CD8-positive, alpha-beta memory T cell (primary cell): ENCODE measurements at regions of chr19 and their contacts with region 1.

Region 1: GRCh38 chr19:14505488-14506432 is 9.8 kb upstream of the GIPC1 start:
- DNase-seq: peak; percentile 63 to 84 (median 66)
- H3K4me3 ChIP-seq: peak overlapping the region; percentile 37
- H3K4me3 Mint-ChIP-seq: peak overlapping the region; percentile 29 to 75 (median 37)
- H3K27ac ChIP-seq: peak overlapping the region; percentile 25
- H3K27ac Mint-ChIP-seq: peak overlapping the region; percentile 89 to 98 (median 93)
- H3K4me1 ChIP-seq: peaks cover 55% of the 10 kb centered on the region
- H3K4me1 Mint-ChIP-seq: peaks cover 32 to 55% (median 48%) of the 10 kb centered on the region in 3 donors
- H3K27me3 ChIP-seq: no peaks in the 10 kb centered on the region
- H3K27me3 Mint-ChIP-seq: no peaks in the 10 kb centered on the region

Region 2: GRCh38 chr19:14337510-14337909 is 168.2 kb before region 1 on chr19:
- CTCF ChIA-PET with region 1: no interaction called
- POLR2A ChIA-PET with region 1: no interaction called
- DNase-seq: peak in 4 of 5 donors; percentile 18 to 53 (median 30)
- H3K4me3 ChIP-seq: no peak overlapping the region
- H3K4me3 Mint-ChIP-seq: peak overlapping the region in 1 of 7 donors; percentile 34
- H3K27ac ChIP-seq: no peak overlapping the region
- H3K27ac Mint-ChIP-seq: peak overlapping the region in 2 of 8 donors; percentile 26 to 70
- H3K4me1 ChIP-seq: peaks cover 5% of the 10 kb centered on the region
- H3K4me1 Mint-ChIP-seq: peaks cover 4 to 7% (median 4%) of the 10 kb centered on the region in 3 donors
- H3K27me3 ChIP-seq: no peaks in the 10 kb centered on the region
- H3K27me3 Mint-ChIP-seq: peaks cover 0 to 4% of the 10 kb centered on the region in 2 donors

Region 3: GRCh38 chr19:14479975-14480699 is 25.6 kb before region 1 on chr19:
- CTCF ChIA-PET with region 1: interaction called, 29 read pairs
- POLR2A ChIA-PET with region 1: no interaction called
- DNase-seq: peak; percentile 58 to 78 (median 62)
- H3K4me3 ChIP-seq: no peak overlapping the region
- H3K4me3 Mint-ChIP-seq: peak overlapping the region in 2 of 7 donors; percentile 49 to 63
- H3K27ac ChIP-seq: no peak overlapping the region
- H3K27ac Mint-ChIP-seq: peak overlapping the region in 1 of 8 donors; percentile 66
- H3K4me1 ChIP-seq: peaks cover 10% of the 10 kb centered on the region
- H3K4me1 Mint-ChIP-seq: peaks cover 12 to 23% (median 16%) of the 10 kb centered on the region in 3 donors
- H3K27me3 ChIP-seq: peaks cover under 1% of the 10 kb centered on the region
- H3K27me3 Mint-ChIP-seq: peaks cover 9 to 10% of the 10 kb centered on the region in 2 donors

Region 4: DNA sequence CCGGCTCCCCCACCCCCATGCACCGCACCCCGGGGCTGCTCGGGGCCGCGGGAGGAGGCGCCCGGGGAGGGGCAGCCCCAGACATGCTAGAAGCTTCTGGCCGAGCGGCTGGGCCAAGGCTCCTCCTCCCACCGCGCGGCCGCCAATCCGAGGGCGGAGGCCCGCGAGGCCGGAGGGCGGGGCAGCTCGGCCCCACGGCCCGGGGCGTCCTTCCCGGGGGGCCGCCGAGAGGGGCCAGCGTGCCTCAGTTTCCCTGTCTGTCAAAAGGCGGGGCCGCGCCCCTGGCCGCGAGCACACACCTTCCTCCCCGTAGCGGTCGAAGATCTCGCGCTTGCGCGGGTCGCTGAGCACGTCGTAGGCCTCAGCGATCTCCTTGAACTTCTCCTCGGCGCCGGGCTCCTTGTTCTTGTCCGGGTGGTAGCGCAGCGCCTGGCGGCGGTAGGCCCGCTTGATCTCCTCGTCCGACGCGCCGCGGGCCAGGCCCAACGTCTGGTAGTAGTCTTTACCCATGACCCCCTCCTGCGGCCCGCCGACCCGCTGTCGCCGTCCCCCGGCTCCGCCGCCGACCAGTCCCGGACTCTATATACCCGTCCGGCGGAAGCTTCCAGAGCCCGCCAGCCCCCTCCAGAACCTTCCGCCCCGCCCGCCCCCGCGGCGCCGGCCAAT is 12.2 kb after region 1 on chr19 and contains the start of gene DNAJB1:
- CTCF ChIA-PET with region 1: interaction called, 65 read pairs
- POLR2A ChIA-PET with region 1: interaction called, 175 read pairs
- DNase-seq: peak; percentile 55 to 77 (median 70)
- H3K4me3 ChIP-seq: peak within 1 kb of the TSS; percentile 98
- H3K4me3 Mint-ChIP-seq: peak within 1 kb of the TSS; percentile 94 to 98 (median 96)
- H3K27ac ChIP-seq: peak within 1 kb of the TSS; percentile 98
- H3K27ac Mint-ChIP-seq: peak within 1 kb of the TSS; percentile 96 to 99 (median 97)
- H3K4me1 ChIP-seq: peaks cover 80% of the 10 kb centered on the region
- H3K4me1 Mint-ChIP-seq: peaks cover 71 to 73% (median 72%) of the 10 kb centered on the region in 3 donors
- H3K27me3 ChIP-seq: no peaks in the 10 kb centered on the region
- H3K27me3 Mint-ChIP-seq: peaks cover 0 to 13% of the 10 kb centered on the region in 2 donors
- total RNA-seq, gene DNAJB1: 98.6 to 103 TPM

Region 5: GRCh38 chr19:14529254-14530004 is 23.7 kb after region 1 on chr19 and contains the start of gene TECR:
- CTCF ChIA-PET with region 1: interaction called, 14 read pairs
- POLR2A ChIA-PET with region 1: interaction called, 9 read pairs
- DNase-seq: peak; percentile 99 to 100 (median 100)
- H3K4me3 ChIP-seq: peak within 1 kb of the TSS; percentile 97
- H3K4me3 Mint-ChIP-seq: peak within 1 kb of the TSS; percentile 85 to 99 (median 94)
- H3K27ac ChIP-seq: peak within 1 kb of the TSS; percentile 91
- H3K27ac Mint-ChIP-seq: peak within 1 kb of the TSS; percentile 94 to 100 (median 98)
- H3K4me1 ChIP-seq: peaks cover 40% of the 10 kb centered on the region
- H3K4me1 Mint-ChIP-seq: peaks cover 34 to 73% (median 47%) of the 10 kb centered on the region in 3 donors
- H3K27me3 ChIP-seq: no peaks in the 10 kb centered on the region
- H3K27me3 Mint-ChIP-seq: no peaks in the 10 kb centered on the region
- total RNA-seq, gene TECR: 114 to 123 TPM

Region 6: DNA sequence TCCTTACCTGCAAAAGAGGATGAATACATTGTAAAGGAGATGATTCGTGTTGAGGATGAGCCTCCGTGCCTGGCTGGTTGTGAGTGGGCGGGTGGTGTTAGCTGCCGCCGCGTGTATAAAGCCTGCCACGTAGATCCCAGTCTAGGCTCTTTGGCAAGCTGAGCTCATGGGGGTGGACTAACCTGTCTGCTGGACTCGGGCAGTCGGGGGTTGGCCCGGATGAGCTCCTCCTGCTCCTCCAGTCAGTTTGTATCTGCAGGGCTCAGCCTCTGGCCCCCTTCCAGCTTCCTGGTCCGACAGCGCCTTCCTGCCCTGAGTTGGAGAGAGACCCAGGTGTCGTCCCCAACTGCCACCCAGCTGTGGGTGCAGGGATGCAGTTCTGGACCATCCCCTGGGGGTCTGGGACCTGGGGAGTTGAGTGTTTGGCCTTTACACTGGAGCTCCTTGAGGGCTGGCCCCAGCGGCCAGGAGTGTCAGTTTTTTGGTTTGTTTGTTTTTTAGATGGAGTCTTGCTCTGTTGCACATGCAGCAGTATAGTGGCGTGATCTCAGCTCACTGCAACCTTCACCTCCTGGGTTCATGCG is 44.5 kb after region 1 on chr19:
- CTCF ChIA-PET with region 1: interaction called, 42 read pairs
- POLR2A ChIA-PET with region 1: interaction called, 8 read pairs
- DNase-seq: no peak
- H3K4me3 ChIP-seq: no peak overlapping the region
- H3K4me3 Mint-ChIP-seq: peak overlapping the region in 1 of 7 donors; percentile 13
- H3K27ac ChIP-seq: peak overlapping the region; percentile 21
- H3K27ac Mint-ChIP-seq: peak overlapping the region in 5 of 8 donors; percentile 12 to 91 (median 68)
- H3K4me1 ChIP-seq: peaks cover 30% of the 10 kb centered on the region
- H3K4me1 Mint-ChIP-seq: peaks cover 30 to 65% (median 34%) of the 10 kb centered on the region in 3 donors
- H3K27me3 ChIP-seq: no peaks in the 10 kb centered on the region
- H3K27me3 Mint-ChIP-seq: no peaks in the 10 kb centered on the region

Region 7: GRCh38 chr19:14556662-14557188 is 51.0 kb after region 1 on chr19:
- CTCF ChIA-PET with region 1: interaction called, 42 read pairs
- POLR2A ChIA-PET with region 1: interaction called, 8 read pairs
- DNase-seq: peak; percentile 61 to 70 (median 62)
- H3K4me3 ChIP-seq: peak overlapping the region; percentile 35
- H3K4me3 Mint-ChIP-seq: peak overlapping the region; percentile 8 to 82 (median 72)
- H3K27ac ChIP-seq: no peak overlapping the region
- H3K27ac Mint-ChIP-seq: peak overlapping the region in 7 of 8 donors; percentile 68 to 97 (median 92)
- H3K4me1 ChIP-seq: peaks cover 48% of the 10 kb centered on the region
- H3K4me1 Mint-ChIP-seq: peaks cover 31 to 68% (median 44%) of the 10 kb centered on the region in 3 donors
- H3K27me3 ChIP-seq: no peaks in the 10 kb centered on the region
- H3K27me3 Mint-ChIP-seq: no peaks in the 10 kb centered on the region

Region 8: GRCh38 chr19:14571695-14572490 is 66.1 kb after region 1 on chr19 and contains the start of gene NDUFB7:
- CTCF ChIA-PET with region 1: interaction called, 18 read pairs
- POLR2A ChIA-PET with region 1: interaction called, 3 read pairs
- DNase-seq: peak; percentile 83 to 93 (median 88)
- H3K4me3 ChIP-seq: peak within 1 kb of the TSS; percentile 100
- H3K4me3 Mint-ChIP-seq: peak within 1 kb of the TSS; percentile 94 to 98 (median 95)
- H3K27ac ChIP-seq: peak within 1 kb of the TSS; percentile 79
- H3K27ac Mint-ChIP-seq: peak within 1 kb of the TSS; percentile 83 to 99 (median 94)
- H3K4me1 ChIP-seq: peaks cover 25% of the 10 kb centered on the region
- H3K4me1 Mint-ChIP-seq: peaks cover 40 to 53% (median 42%) of the 10 kb centered on the region in 3 donors
- H3K27me3 ChIP-seq: no peaks in the 10 kb centered on the region
- H3K27me3 Mint-ChIP-seq: no peaks in the 10 kb centered on the region
- total RNA-seq, gene NDUFB7: 123 to 126 TPM

Region 9: DNA sequence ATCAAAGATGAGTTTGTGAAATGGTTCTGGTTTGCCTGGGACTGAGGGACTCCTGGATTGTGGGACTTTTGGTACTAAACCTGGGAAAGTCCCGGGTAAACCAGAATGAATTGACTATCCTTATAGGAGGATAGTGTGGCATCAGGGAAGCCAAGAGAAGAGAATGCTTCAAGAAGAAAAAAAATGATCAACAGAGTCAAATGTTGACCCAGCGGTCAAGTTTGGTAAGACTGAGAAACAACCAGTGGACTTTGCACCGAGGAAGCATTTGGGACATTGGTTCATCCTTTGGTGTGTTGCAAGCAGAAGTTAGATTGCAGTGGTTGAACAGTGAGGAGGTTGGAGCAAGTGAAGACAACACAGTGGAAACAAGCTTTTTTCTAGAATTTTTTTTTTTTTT is 110.6 kb after region 1 on chr19:
- CTCF ChIA-PET with region 1: no interaction called
- POLR2A ChIA-PET with region 1: no interaction called
- DNase-seq: no peak
- H3K4me3 ChIP-seq: no peak overlapping the region
- H3K4me3 Mint-ChIP-seq: no peak overlapping the region
- H3K27ac ChIP-seq: no peak overlapping the region
- H3K27ac Mint-ChIP-seq: no peak overlapping the region
- H3K4me1 ChIP-seq: no peaks in the 10 kb centered on the region
- H3K4me1 Mint-ChIP-seq: no peaks in the 10 kb centered on the region
- H3K27me3 ChIP-seq: no peaks in the 10 kb centered on the region
- H3K27me3 Mint-ChIP-seq: peaks cover 11 to 18% of the 10 kb centered on the region in 2 donors